ENCODE measurements at regions of chr1 and their contacts with region 1.

Region 1: DNA sequence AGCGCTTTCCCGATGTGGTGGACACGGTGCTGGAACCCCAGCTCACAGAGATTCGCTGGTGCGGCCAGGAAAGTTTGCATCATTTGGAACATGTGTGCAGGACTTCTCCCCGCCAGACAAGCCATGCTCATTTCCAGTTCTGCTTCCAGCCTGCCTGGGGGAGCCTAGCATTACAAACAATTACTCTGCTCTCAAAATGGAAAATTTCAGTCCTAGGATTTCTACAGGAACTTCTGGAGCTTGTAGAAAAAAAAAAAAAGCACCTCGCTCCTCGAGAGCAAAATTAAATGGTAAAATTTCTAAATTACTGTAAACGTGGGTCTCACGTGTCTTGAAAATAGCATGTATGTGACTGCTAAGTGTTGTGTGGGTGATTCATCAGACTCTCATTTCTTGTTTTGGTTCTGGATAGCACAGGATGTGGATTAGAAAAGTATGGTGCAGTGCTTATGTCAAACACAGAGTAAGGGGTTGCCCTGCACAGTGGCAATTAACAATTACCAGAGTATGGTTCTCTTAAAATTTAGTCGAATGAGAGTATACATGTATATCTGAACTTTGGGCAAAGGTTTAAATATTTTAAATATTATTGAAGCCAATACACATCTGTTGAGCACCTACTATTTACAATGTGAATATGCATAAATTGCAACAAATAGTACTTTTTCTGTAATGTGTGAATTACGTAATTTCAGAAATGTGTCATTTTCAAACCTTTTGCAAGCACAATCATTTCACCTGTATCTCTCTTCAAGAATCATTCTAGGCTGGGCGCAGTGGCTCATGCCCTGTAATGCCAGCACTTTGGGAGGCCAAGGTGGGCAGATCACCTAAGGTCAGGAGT is 61.8 kb upstream of the PTGFRN start:
- DNase-seq: peak; percentile 57
- ATAC-seq: peak; percentile 99
- H3K4me3 Mint-ChIP-seq: no peak overlapping the region
- H3K27ac Mint-ChIP-seq: peak overlapping the region; percentile 19
- H3K4me1 Mint-ChIP-seq: peaks cover 32% of the 10 kb centered on the region
- H3K27me3 Mint-ChIP-seq: peaks cover 2% of the 10 kb centered on the region

Region 2: DNA sequence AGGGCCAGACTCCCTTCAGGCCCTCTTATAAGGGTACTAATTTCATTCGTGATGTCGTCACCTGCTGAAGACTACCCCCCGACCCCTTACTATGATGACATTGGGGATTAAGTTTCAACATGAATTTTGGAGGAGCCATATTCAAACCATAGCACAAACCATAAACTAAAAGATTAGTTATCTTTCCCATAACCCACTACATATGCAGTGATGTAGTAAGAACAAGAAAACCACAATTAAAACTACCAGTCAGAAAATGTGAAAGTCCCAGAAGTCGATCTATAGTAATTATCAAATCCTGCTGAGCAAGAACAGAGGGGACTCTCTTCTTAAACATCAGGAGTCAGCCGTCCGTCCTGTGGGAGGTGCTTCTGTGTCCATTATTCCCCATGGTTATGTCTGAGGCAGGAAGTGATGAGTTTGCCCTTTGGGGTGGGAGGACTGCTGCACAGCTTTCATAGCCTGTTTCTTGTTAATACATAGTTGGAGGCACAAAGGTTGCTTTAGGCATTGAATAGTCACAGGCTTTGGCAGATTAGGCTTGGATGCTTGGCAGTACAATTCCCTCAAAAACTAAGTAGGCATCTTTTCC is 25.9 kb after region 1 on chr1:
- CTCF ChIA-PET with region 1: interaction called, 3 read pairs
- POLR2A ChIA-PET with region 1: no interaction called
- intact Hi-C with region 1: loop called in 1 of 2 experiments (anchors 2 kb)
- DNase-seq: peak; percentile 52
- ATAC-seq: peak; percentile 73
- H3K4me3 Mint-ChIP-seq: no peak overlapping the region
- H3K27ac Mint-ChIP-seq: peak overlapping the region; percentile 5
- H3K4me1 Mint-ChIP-seq: peaks cover 33% of the 10 kb centered on the region
- H3K27me3 Mint-ChIP-seq: no peaks in the 10 kb centered on the region

Region 3: DNA sequence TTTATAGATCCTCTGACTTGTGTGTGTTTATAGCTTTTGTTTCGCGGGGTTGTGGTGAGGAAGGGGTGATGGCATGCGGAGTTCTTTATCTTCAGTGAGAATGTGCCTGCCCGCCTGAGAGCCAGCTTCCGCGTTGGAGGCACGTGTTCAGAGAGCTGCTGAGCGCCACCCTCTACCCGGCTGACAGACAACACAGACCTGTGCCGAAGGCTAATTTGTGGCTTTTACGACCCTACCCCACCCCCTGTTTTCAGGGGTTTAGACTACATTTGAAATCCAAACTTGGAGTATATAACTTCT is 139.3 kb after region 1 on chr1:
- CTCF ChIA-PET with region 1: no interaction called
- POLR2A ChIA-PET with region 1: no interaction called
- intact Hi-C with region 1: loop called in 1 of 2 experiments (anchors 5 kb)
- DNase-seq: peak; percentile 80
- ATAC-seq: peak; percentile 81
- H3K4me3 Mint-ChIP-seq: peak overlapping the region; percentile 69
- H3K27ac Mint-ChIP-seq: peak overlapping the region; percentile 93
- H3K4me1 Mint-ChIP-seq: peaks cover 53% of the 10 kb centered on the region
- H3K27me3 Mint-ChIP-seq: no peaks in the 10 kb centered on the region

Region 4: GRCh38 chr1:117001254-117001927 is 153.5 kb after region 1 on chr1 and contains the start of gene CD101:
- CTCF ChIA-PET with region 1: no interaction called
- POLR2A ChIA-PET with region 1: no interaction called
- intact Hi-C with region 1: loop called in 1 of 2 experiments (anchors 1 kb)
- DNase-seq: peak; percentile 70
- ATAC-seq: peak; percentile 95
- H3K4me3 Mint-ChIP-seq: peak within 1 kb of the TSS; percentile 3
- H3K27ac Mint-ChIP-seq: peak within 1 kb of the TSS; percentile 66
- H3K4me1 Mint-ChIP-seq: peaks cover 53% of the 10 kb centered on the region
- H3K27me3 Mint-ChIP-seq: peaks cover 3% of the 10 kb centered on the region
- total RNA-seq, gene CD101: 0.30 to 0.60 TPM